ENCODE measurements at regions of chr3 and their contacts with region 1.

Region 1: DNA sequence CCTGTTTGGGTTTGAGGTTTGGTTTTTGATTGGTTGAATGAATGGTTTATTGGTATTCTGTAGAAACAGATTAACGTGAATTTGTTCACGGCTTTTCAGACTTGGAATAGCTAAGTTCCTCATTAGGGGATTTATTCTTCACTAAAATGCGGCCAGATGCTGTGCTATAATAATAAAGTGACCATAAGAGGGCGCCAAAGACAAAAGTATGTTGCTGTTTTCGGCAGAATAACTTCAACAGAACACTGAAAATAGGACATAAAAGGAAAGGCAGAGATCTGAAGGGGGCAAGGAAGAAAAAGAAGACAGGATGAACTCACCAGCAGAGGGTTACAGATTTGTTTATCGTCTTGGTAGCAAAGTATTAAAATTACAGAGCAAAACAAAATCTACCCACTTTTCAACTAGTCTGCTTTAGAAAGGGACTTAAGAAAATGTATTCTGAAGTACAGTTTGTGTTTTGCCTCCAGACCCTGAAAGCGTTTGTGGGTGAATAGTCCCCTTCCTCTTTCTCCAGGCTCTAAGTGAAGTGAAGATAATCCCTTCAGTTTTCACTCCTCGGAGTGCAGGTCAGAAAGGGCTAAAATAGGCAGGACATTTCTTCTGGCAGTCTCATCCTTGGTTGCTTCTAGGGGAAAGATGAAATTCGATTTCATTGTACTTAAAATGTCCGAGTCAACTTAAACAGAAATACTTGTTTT is 147.6 kb downstream of the IL20RB start:
- DNase-seq: peak in 2 of 10 donors; percentile 13 to 16

Region 2: DNA sequence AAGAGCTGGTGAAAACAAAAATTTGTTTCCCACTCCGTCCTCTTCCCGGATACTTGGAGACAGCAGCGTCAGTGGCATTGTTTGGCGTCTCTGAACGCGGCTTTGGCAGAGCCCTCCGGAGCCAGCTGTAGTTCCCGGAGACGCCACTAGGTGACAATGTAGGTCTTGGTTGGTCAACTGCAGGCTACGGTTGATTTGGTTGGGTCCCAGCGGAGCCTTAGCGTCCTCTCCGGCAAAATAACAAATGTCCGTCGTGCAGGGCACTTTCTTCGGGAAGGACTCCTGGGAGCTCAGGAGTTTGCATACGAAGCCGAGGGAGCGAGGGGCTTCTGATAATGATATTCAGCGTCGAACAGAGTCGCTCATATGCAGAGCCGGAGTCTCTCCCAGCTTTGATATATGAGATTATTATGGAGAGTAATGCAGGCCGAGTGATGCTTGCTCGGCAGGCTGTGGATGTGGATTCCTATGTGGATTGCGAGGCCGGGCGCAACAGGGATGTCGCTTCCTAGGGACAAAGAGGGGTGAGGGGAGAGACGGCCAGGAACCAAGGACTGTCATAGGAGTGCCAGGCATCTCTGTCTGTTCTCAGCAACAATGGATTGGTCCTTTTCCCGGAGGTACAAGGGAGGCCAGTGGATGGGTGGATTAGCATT is 72.8 kb before region 1 on chr3:
- intact Hi-C with region 1: loop called (anchors 1 kb)
- DNase-seq: peak; percentile 81 to 98 (median 94)

Region 3: DNA sequence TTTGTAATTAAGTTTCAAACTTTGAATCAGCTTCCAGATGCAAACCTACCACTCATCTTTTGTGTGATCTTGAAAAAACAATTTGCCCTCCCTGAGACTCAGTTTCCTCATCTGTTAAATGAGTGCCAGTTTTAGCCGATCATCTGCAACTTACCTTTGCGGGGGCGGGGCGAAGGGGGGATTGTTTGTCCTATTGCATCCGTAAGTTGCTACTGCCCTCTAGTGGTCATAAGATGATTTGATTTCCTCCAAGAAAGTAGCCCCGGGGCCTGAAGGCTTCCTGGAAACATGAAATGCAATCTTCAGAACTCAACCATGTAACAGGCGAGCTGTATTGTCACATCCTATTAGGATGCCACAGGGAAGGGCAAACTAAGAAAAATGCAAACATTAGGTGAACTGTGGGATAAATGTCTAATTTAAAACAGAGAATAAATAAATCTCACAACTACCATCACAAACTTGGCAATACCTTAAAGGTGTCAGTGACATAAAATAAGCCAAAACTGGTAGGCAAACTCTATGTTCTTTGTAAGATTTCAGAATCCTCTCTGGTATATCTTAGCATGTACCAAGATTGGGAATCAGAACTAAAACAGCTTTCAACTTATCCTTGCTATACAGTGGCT is 841.0 kb after region 1 on chr3:
- intact Hi-C with region 1: loop called (anchors 1 kb)
- DNase-seq: peak in 6 of 10 donors; percentile 14 to 79 (median 20)

Region 4: GRCh38 chr3:137970914-137971831 is 865.7 kb after region 1 on chr3:
- intact Hi-C with region 1: loop called (anchors 2 kb)
- DNase-seq: peak; percentile 59 to 96 (median 79)

Region 5: DNA sequence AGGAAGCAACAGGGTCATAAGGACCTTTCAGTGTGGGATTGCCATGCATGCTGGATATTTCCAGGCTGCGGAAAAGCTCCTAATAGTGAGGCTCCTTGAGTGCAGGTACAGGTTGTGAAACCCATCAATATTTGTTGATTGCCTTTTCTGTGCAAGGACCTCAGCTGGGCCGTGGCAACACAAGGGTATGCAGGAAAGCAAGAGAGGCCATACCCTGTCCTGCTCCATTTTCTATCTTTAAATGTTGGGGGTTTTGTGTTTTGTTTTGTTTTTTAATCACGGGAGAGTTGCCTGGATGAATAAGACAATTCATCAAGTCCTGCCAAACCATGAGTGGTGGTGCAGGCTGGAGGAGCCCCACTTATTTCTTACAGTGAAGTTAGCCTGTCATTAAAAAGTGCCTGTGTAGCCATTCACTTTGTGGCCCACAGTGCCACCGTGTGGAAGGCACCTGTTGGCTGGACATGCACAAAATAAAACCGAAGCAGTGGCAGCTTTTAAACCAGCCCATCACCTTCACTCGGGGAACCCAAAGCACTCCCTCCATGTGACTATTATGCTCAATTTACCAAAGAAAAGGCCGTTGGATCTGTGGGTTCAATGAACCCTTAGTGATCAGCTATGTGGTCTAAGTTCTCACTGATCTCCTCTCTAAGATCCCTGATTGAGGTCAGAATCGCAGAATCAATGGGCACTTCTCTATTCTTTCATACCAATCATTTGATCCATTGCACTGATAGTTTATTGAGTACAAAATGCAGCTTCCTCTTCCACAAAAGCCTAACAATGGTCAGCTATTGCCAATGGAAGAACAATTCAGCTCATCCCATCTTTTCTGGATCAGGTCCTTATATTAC is 946.7 kb after region 1 on chr3:
- intact Hi-C with region 1: loop called (anchors 5 kb)
- DNase-seq: peak in 6 of 10 donors; percentile 22 to 75 (median 29)

Measured in posterior cingulate gyrus (tissue), 11 donors.